Caco-2 (cell line): ENCODE measurements at regions of chr3 and their contacts with region 1.

Region 1: DNA sequence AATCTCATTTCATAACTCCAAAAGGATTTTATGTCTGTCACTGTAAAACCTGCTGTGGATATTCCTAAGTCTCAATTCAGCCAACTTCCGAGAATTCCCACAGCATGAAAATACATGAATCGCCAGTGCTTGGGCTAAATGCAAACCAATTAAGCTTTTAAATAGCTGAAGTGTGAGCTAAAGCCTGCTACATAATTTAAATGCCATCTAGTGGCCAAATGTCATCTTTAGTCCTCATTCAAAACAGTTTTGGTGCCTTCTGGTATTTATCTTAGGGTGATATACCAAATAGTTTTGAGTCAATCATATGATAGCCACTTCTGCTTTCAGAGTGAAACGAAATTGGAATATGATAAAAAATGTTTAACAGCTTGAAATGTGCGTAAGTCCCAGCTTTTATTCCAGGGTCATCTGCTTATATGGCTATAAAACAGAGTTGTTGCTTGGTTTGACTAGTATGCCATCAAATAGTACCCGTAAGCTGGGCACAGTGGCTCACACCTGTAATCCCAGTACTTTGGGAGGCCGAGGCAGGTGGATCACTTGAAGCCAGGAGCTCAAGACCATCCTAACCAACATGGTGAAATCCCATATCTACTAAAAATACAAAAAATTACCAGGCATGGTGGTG is 41.8 kb upstream of the CCNL1 start:
- DNase-seq: peak in 1 of 2 experiments; percentile 10
- H3K4me3 ChIP-seq: no peak overlapping the region
- H3K4me3 Mint-ChIP-seq: no peak overlapping the region
- H3K27ac Mint-ChIP-seq: no peak overlapping the region
- H3K4me1 ChIP-seq: no peaks in the 10 kb centered on the region
- H3K4me1 Mint-ChIP-seq: no peaks in the 10 kb centered on the region
- H3K27me3 ChIP-seq: no peaks in the 10 kb centered on the region
- H3K27me3 Mint-ChIP-seq: no peaks in the 10 kb centered on the region
- CTCF ChIP-seq: peak; percentile 45 to 55

Region 2: GRCh38 chr3:157104928-157105652 is 96.7 kb before region 1 on chr3:
- CTCF ChIA-PET with region 1: no interaction called
- POLR2A ChIA-PET with region 1: no interaction called
- intact Hi-C with region 1: no loop called
- DNase-seq: no peak
- H3K4me3 ChIP-seq: no peak overlapping the region
- H3K4me3 Mint-ChIP-seq: no peak overlapping the region
- H3K27ac Mint-ChIP-seq: no peak overlapping the region
- H3K4me1 ChIP-seq: no peaks in the 10 kb centered on the region
- H3K4me1 Mint-ChIP-seq: peaks cover 12% of the 10 kb centered on the region
- H3K27me3 ChIP-seq: no peaks in the 10 kb centered on the region
- H3K27me3 Mint-ChIP-seq: no peaks in the 10 kb centered on the region
- CTCF ChIP-seq: no peak

Region 3: GRCh38 chr3:157174649-157175498 is 26.9 kb before region 1 on chr3:
- CTCF ChIA-PET with region 1: interaction called, 11 read pairs
- POLR2A ChIA-PET with region 1: interaction called, 9 read pairs
- intact Hi-C with region 1: loop called (anchors 1 kb)
- DNase-seq: peak; percentile 97 to 99
- H3K4me3 ChIP-seq: peak overlapping the region; percentile 72
- H3K4me3 Mint-ChIP-seq: peak overlapping the region; percentile 80
- H3K27ac Mint-ChIP-seq: peak overlapping the region; percentile 87
- H3K4me1 ChIP-seq: no peaks in the 10 kb centered on the region; the same call in 1 of the 2 replicates
- H3K4me1 Mint-ChIP-seq: peaks cover 7% of the 10 kb centered on the region
- H3K27me3 ChIP-seq: no peaks in the 10 kb centered on the region
- H3K27me3 Mint-ChIP-seq: no peaks in the 10 kb centered on the region
- CTCF ChIP-seq: no peak

Region 4: GRCh38 chr3:157239082-157239704 is 37.4 kb after region 1 on chr3:
- CTCF ChIA-PET with region 1: interaction called, 4 read pairs
- POLR2A ChIA-PET with region 1: no interaction called
- intact Hi-C with region 1: loop called (anchors 1 kb)
- DNase-seq: peak; percentile 70 to 82
- H3K4me3 ChIP-seq: no peak overlapping the region
- H3K4me3 Mint-ChIP-seq: no peak overlapping the region
- H3K27ac Mint-ChIP-seq: no peak overlapping the region
- H3K4me1 ChIP-seq: no peaks in the 10 kb centered on the region
- H3K4me1 Mint-ChIP-seq: peaks cover 10% of the 10 kb centered on the region
- H3K27me3 ChIP-seq: no peaks in the 10 kb centered on the region; the same call in 1 of the 2 replicates
- H3K27me3 Mint-ChIP-seq: peaks cover 10% of the 10 kb centered on the region
- CTCF ChIP-seq: peak; percentile 86 to 95

Region 5: GRCh38 chr3:157493627-157494550 is 292.1 kb after region 1 on chr3:
- CTCF ChIA-PET with region 1: no interaction called
- POLR2A ChIA-PET with region 1: no interaction called
- intact Hi-C with region 1: loop called (anchors 2 kb)
- DNase-seq: peak in 1 of 2 experiments; percentile 16
- H3K4me3 ChIP-seq: no peak overlapping the region
- H3K4me3 Mint-ChIP-seq: no peak overlapping the region
- H3K27ac Mint-ChIP-seq: no peak overlapping the region
- H3K4me1 ChIP-seq: peaks cover 5% of the 10 kb centered on the region; the same call in 1 of the 2 replicates
- H3K4me1 Mint-ChIP-seq: peaks cover 6% of the 10 kb centered on the region
- H3K27me3 ChIP-seq: no peaks in the 10 kb centered on the region
- H3K27me3 Mint-ChIP-seq: no peaks in the 10 kb centered on the region
- CTCF ChIP-seq: peak; percentile 42 to 43

Region 6: GRCh38 chr3:157581371-157581770 is 379.6 kb after region 1 on chr3:
- CTCF ChIA-PET with region 1: no interaction called
- POLR2A ChIA-PET with region 1: no interaction called
- intact Hi-C with region 1: no loop called
- DNase-seq: no peak
- H3K4me3 ChIP-seq: no peak overlapping the region
- H3K4me3 Mint-ChIP-seq: no peak overlapping the region
- H3K27ac Mint-ChIP-seq: no peak overlapping the region
- H3K4me1 ChIP-seq: no peaks in the 10 kb centered on the region
- H3K4me1 Mint-ChIP-seq: no peaks in the 10 kb centered on the region
- H3K27me3 ChIP-seq: no peaks in the 10 kb centered on the region
- H3K27me3 Mint-ChIP-seq: no peaks in the 10 kb centered on the region
- CTCF ChIP-seq: no peak